Sigmoid colon (tissue), 7 donors: ENCODE measurements at regions of chr17 and their contacts with region 1.

Region 1: DNA sequence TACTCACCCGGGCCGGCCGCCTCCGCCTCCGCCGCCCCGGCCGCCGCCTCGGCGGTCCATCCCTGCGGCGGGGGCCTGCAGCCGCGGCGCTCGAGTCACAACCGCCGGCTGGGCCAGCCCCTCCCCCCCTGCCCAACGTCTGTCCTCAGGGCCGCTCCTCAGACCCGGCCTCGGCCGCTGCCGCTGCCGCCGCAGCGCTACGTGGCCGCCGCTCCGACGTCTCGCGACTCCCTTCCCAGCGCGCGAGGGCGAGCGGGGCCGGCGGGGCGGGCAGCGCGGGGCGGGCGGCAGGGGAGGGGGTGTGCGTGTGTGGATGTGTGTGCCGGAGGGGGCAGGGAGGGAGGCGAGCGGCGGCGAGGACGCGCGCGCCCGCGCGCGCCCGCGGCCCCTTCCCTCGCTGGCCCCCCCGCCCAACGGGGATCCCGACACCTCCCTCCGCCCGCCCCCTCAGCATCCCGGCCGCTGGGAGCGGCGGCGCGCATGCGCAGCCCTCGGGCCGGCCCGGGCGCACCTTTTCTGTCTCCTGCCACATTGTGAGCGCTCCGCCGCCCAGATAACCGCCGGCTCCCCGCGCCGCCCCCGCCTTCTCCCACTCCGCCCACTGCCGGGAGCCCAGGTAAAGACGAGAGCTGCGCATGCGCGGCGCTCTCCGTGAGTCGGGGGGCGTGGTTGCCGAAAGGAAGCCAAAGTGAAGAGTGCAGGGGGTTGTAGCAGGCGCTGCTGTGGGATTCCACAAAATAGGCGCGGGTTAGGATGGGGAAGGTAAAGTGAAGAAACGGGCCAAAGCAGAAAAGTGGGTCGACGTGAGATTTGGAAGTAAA is at the start of gene ZNF652:
- DNase-seq: peak; percentile 95
- H3K4me3 ChIP-seq: peak within 1 kb of the TSS; percentile 90 to 96 (median 94)
- H3K27ac ChIP-seq: peak within 1 kb of the TSS; percentile 94 to 99 (median 96)
- H3K4me1 ChIP-seq: peaks cover 0 to 44% (median 33%) of the 10 kb centered on the region in 4 donors
- H3K27me3 ChIP-seq: no peaks in the 10 kb centered on the region
- CTCF ChIP-seq: no peak
- EP300 ChIP-seq: no peak
- POLR2A ChIP-seq: no peak
- total RNA-seq, gene ZNF652: 83.1 to 134 (median 114) TPM

Region 2: DNA sequence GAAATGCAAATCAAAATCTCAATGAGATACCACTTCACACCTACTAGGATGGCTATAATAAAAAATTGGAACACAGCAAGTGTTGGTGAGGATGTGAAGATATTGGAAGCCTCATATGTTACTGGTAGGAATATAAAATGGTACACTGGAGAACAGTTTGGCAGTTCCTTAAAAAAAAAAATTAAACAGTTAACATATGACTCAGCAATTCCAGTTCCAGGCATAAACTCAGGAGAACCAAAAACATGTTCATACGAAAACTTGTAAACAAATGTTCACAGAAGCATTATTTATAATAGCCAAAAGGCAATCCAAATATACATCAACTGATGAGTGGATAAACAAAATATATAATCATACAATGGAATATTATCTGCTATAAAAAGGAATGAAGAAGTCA is 28.3 kb before region 1 on chr17:
- intact Hi-C with region 1: loop called (anchors 2 kb)
- DNase-seq: no peak
- H3K4me3 ChIP-seq: no peak overlapping the region
- H3K27ac ChIP-seq: peak overlapping the region in 3 of 4 donors; percentile 65 to 76 (median 69)
- H3K4me1 ChIP-seq: peaks cover 0 to 81% (median 47%) of the 10 kb centered on the region in 4 donors
- H3K27me3 ChIP-seq: no peaks in the 10 kb centered on the region
- CTCF ChIP-seq: no peak
- EP300 ChIP-seq: no peak
- POLR2A ChIP-seq: no peak